Right ventricle myocardium inferior (tissue), 1 donor: ENCODE measurements at regions of chr4 and their contacts with region 1.

Region 1: GRCh38 chr4:112099701-112100297 is 45.5 kb upstream of the FAM241A start:
- DNase-seq: no peak
- ATAC-seq: peak; percentile 34

Region 2: DNA sequence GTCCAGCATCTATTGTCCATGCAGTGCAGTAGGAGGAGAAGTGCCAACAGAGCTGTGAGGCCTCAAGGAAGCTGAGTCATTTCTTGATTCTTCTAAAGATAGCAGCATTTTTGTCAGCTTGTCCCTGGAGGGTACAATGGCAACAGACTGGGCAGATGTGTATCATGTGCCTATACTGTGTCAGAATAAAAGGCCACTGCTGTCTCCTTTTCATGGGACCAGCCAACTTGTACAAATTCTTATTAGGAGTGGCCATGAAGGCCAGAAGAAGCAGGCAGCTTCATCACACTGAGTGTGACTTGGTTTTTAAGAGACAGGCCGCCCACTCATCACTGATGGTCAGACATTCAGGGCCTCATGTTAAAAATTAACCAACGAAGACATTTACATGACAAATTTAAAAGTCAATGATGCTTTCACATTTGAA is 139.5 kb before region 1 on chr4:
- intact Hi-C with region 1: no loop called
- DNase-seq: no peak
- ATAC-seq: no peak

Region 3: DNA sequence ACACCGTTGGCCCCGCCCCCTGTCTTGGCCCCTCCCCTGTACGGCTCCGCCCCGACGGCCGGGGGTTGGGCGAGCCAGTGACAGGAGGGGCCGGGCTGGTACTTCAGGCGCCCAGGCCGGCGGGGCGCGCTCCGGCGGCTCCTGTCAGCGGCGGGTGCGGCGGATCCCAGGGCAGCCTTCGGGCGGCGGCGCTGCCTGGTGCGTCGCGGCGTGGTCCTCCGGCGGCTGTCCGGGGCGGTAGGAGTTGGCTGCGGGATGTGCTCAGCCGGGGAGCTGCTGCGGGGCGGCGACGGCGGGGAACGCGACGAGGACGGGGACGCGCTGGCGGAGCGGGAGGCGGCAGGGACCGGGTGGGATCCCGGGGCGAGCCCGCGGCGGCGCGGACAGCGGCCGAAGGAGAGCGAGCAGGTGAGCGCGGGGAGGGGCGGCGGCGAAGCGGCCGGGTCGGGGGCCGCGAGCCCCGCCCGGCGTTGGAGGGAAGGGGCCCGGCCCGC is 45.6 kb after region 1 on chr4 and contains the start of gene FAM241A:
- intact Hi-C with region 1: loop called (anchors 5 kb)
- DNase-seq: peak; percentile 94
- ATAC-seq: peak; percentile 99
- total RNA-seq, gene FAM241A: 8.8 TPM

Region 4: DNA sequence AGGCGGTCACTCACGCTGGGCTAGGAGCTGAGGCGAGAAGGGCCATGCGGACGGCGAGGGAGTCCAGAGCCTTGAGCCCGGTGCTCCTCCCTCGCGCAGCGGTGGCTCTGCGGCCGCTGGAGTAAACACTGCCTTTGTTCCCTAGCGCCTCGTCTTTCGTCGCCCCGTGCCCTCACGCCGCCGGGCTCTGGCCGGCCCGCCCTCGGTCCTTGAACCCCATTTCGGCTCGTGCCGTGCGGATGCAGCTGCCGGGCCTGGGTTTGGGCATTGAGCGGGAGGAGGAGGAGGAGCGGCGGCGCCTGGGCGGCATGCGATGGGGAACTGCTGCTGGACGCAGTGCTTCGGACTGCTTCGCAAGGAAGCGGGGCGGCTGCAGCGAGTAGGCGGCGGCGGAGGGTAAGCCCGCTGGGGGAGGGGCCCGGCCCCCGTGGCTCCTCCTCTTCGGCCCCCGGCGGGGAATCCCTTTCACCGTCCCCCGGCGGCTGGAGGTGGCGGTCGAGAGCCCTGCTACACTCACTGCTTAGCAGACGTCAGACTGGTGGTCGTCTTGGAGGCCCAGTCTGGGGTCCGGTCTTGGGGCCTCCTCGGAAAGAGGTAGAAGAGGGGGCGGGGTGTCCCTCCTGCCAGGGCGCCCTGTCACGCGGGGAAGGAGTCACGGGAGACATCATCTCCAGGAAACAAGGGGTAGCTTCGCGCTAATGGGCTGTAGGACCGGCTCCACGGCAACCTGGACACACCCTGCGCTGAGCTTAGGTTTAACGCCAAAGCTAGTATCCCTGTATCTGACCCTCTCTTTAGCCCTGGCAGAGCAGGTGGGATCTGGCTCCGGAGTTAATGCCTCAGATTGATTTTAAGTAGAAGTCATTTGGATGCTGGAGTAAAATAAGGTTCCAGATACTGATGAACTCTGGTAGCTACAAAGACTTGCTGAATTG is 132.2 kb after region 1 on chr4 and contains the start of gene AP1AR:
- intact Hi-C with region 1: loop called (anchors 1 kb)
- DNase-seq: peak; percentile 91
- ATAC-seq: peak; percentile 82
- total RNA-seq, gene AP1AR: 9.4 TPM

Region 5: GRCh38 chr4:112523764-112524505 is 424.1 kb after region 1 on chr4:
- intact Hi-C with region 1: loop called (anchors 10 kb)
- DNase-seq: peak; percentile 83
- ATAC-seq: peak; percentile 75